ENCODE measurements at regions of chr2 and their contacts with region 1.

Region 1: GRCh38 chr2:200787348-200788120 is 24.2 kb upstream of the BZW1 start:
- DNase-seq: peak; percentile 96
- ATAC-seq: peak; percentile 66
- H3K4me3 ChIP-seq: peak overlapping the region; percentile 50
- H3K27ac ChIP-seq: peak overlapping the region; percentile 98
- H3K4me1 ChIP-seq: peaks cover 61% of the 10 kb centered on the region
- H3K27me3 ChIP-seq: no peaks in the 10 kb centered on the region
- CTCF ChIP-seq: no peak

Region 2: DNA sequence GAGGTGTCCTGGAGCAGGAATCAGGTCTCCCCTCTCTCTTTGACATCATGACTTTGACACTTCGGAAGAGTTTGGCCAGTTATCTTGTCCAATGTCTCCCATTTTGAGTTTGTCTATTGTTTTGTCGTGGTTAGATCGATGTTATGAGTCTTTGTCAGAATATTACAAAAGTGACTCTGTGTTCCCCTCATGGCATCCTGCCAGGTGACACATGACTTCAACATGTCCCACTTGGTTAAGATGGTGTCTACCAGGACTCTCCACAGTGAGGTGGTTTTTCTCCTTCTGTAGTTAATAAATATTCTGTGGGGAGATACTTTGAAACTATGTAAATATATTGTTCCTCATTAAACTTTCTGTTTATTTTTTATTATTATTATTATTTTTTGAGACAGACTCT is 52.5 kb before region 1 on chr2:
- CTCF ChIA-PET with region 1: no interaction called
- POLR2A ChIA-PET with region 1: no interaction called
- intact Hi-C with region 1: loop called (anchors 2 kb)
- DNase-seq: peak; percentile 39
- ATAC-seq: no peak
- H3K4me3 ChIP-seq: no peak overlapping the region
- H3K27ac ChIP-seq: no peak overlapping the region
- H3K4me1 ChIP-seq: peaks cover 4% of the 10 kb centered on the region
- H3K27me3 ChIP-seq: no peaks in the 10 kb centered on the region
- CTCF ChIP-seq: no peak

Region 3: GRCh38 chr2:200765139-200765951 is 22.2 kb before region 1 on chr2:
- CTCF ChIA-PET with region 1: interaction called, 7 read pairs
- POLR2A ChIA-PET with region 1: no interaction called
- intact Hi-C with region 1: loop called (anchors 1 kb)
- DNase-seq: peak; percentile 95
- ATAC-seq: peak; percentile 83
- H3K4me3 ChIP-seq: peak overlapping the region; percentile 13; the same call in 1 of the 2 replicates
- H3K27ac ChIP-seq: peak overlapping the region; percentile 98
- H3K4me1 ChIP-seq: peaks cover 64% of the 10 kb centered on the region
- H3K27me3 ChIP-seq: no peaks in the 10 kb centered on the region
- CTCF ChIP-seq: no peak